Ovary (tissue), 10 donors: ENCODE measurements at regions of chr2 and their contacts with region 1.

Region 1: DNA sequence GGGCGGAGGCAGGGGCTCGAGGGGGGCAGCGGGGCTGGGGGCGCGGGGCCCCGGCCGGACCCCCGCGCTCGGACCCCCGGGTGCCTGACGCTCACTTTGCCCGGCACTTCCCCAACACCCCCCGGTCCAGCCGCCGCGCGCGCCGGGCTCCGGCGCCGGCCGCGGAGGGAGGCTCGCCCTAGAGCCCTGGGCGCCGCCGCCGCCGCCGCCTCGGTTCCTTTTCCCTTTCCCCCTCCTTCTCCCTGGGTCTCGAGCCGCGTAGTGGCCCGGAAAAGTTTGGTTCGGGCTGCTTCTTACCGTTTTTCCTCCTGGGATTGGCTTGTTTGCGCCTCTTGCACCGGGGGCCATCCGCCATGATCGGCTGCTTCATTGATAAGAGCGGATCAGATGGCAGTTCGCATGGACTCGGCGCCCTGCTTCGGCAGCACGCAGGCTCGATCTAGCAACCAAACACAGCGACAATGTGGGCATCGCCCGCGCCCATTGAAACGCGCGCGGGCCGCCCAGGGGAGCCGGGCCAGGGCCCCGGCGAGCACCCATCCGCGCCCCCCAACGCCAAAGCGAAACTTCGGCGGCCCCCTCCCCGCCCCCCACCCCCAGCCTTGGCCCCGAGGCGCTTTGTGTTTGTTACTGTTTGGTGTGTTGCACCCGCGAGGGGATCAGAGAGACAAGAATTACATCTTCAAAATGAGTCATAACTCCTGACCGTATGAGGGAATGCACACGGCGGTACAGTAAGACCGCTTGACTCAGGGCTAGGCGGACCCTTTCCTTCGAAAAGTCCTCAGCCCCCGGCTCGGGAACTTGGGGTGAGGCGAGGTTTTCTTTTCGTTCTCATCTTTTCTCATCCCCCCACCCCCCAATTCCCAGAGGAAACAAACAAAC is 2.7 kb downstream of the ZEB2 start:
- DNase-seq: peak; percentile 63 to 81 (median 75)
- H3K4me3 ChIP-seq: peak overlapping the region; percentile 75
- H3K27ac ChIP-seq: peak overlapping the region; percentile 95 to 99
- H3K4me1 ChIP-seq: peaks cover 6% of the 10 kb centered on the region
- H3K27me3 ChIP-seq: no peaks in the 10 kb centered on the region
- CTCF ChIP-seq: no peak
- EP300 ChIP-seq: no peak
- POLR2A ChIP-seq: peak; percentile 56

Region 2: GRCh38 chr2:143513081-143513480 is 1004.1 kb before region 1 on chr2:
- intact Hi-C with region 1: loop called in 1 of 4 experiments (anchors 5 kb)
- DNase-seq: peak; percentile 36 to 68 (median 56)
- H3K4me3 ChIP-seq: no peak overlapping the region
- H3K27ac ChIP-seq: peak overlapping the region in 1 of 2 donors; percentile 18
- H3K4me1 ChIP-seq: no peaks in the 10 kb centered on the region
- H3K27me3 ChIP-seq: no peaks in the 10 kb centered on the region
- CTCF ChIP-seq: peak; percentile 64 to 67 (median 65)
- EP300 ChIP-seq: no peak
- POLR2A ChIP-seq: no peak

Region 3: DNA sequence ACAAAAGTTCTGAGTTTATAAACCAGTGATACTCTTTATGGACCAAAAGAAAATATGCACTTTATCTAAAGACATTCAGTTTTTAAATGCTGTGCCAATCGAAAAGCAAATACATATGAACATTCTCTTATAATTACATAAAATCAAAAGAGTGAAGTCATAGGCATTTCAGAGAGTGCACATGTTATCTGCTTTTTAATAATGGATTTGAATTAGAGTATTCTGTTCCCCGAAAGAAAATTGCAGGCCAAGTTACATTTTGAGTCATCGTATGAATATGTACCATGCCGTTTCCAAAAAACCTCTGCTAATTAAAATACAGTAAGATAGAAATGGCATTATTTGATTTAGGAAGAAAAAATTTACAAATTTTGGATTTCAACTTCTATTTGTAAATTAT is 563.0 kb before region 1 on chr2:
- intact Hi-C with region 1: loop called in 1 of 4 experiments (anchors 5 kb)
- DNase-seq: no peak
- H3K4me3 ChIP-seq: no peak overlapping the region
- H3K27ac ChIP-seq: no peak overlapping the region
- H3K4me1 ChIP-seq: peaks cover 4% of the 10 kb centered on the region
- H3K27me3 ChIP-seq: no peaks in the 10 kb centered on the region
- CTCF ChIP-seq: no peak
- EP300 ChIP-seq: no peak
- POLR2A ChIP-seq: no peak

Region 4: GRCh38 chr2:143974262-143974661 is 543.0 kb before region 1 on chr2:
- intact Hi-C with region 1: no loop called
- DNase-seq: no peak
- H3K4me3 ChIP-seq: no peak overlapping the region
- H3K27ac ChIP-seq: no peak overlapping the region
- H3K4me1 ChIP-seq: peaks cover 1% of the 10 kb centered on the region
- H3K27me3 ChIP-seq: peaks cover 4% of the 10 kb centered on the region
- CTCF ChIP-seq: no peak
- EP300 ChIP-seq: no peak
- POLR2A ChIP-seq: no peak

Region 5: GRCh38 chr2:144430722-144431391 is 86.4 kb before region 1 on chr2:
- intact Hi-C with region 1: loop called in 1 of 4 experiments (anchors 10 kb)
- DNase-seq: peak; percentile 51 to 75 (median 60)
- H3K4me3 ChIP-seq: no peak overlapping the region
- H3K27ac ChIP-seq: peak overlapping the region; percentile 49 to 72
- H3K4me1 ChIP-seq: peaks cover 11% of the 10 kb centered on the region
- H3K27me3 ChIP-seq: no peaks in the 10 kb centered on the region
- CTCF ChIP-seq: no peak
- EP300 ChIP-seq: no peak
- POLR2A ChIP-seq: no peak

Region 6: DNA sequence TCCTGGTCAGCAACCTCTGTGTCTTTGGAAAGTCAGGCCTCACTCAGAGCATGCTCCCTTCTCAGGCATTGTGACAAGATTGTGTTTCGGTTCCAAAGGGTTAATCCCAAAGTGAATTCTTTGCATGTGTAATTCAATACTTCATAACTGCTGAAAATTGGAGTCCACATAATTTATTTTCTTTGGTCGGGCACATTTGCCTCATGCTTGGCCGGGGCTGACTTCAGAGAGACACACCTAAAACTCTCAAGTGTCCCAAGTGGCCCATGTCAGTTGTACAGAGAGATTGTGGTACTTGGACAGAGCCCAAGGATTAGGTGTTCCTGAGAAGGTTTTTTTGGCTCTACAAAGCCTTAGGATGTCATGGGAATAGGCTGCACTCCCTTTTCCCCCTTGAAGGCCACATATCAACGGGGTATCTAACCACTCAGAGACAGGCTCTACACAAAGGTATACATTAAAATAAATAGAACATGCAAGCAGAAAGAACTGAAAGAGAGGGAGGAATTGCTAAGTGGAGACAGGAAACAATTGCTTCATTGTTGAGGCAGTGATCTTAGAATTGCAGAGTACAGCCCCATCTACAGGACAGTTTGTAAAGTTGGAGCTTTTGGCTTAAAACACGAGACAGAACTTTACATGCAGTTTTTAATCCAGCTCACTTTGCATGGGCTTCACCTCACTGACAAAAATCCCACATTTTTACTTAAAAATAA is 1235.0 kb after region 1 on chr2:
- intact Hi-C with region 1: loop called in 3 of 4 experiments (anchors 10 kb)
- DNase-seq: peak in 1 of 5 donors; percentile 29
- H3K4me3 ChIP-seq: no peak overlapping the region
- H3K27ac ChIP-seq: peak overlapping the region in 1 of 2 donors; percentile 54
- H3K4me1 ChIP-seq: peaks cover 18% of the 10 kb centered on the region
- H3K27me3 ChIP-seq: no peaks in the 10 kb centered on the region
- CTCF ChIP-seq: peak in 2 of 3 donors; percentile 69
- EP300 ChIP-seq: no peak
- POLR2A ChIP-seq: no peak